Activated CD8-positive, alpha-beta T cell treated with anti-CD3 and anti-CD28 coated beads, Interleukin-2, amount 10 ng/mL, durations not matched to agents 7 days and 5 days (primary cell): ENCODE measurements at regions of chr20 and their contacts with region 1.

Region 1: GRCh38 chr20:45373353-45374100 is 4.6 kb downstream of the TP53TG5 start:
- DNase-seq: peak; percentile 91
- ATAC-seq: peak; percentile 90
- H3K4me3 Mint-ChIP-seq: peak overlapping the region; percentile 73
- H3K27ac Mint-ChIP-seq: peak overlapping the region; percentile 87
- H3K4me1 Mint-ChIP-seq: peaks cover 38% of the 10 kb centered on the region
- H3K27me3 Mint-ChIP-seq: no peaks in the 10 kb centered on the region

Region 2: DNA sequence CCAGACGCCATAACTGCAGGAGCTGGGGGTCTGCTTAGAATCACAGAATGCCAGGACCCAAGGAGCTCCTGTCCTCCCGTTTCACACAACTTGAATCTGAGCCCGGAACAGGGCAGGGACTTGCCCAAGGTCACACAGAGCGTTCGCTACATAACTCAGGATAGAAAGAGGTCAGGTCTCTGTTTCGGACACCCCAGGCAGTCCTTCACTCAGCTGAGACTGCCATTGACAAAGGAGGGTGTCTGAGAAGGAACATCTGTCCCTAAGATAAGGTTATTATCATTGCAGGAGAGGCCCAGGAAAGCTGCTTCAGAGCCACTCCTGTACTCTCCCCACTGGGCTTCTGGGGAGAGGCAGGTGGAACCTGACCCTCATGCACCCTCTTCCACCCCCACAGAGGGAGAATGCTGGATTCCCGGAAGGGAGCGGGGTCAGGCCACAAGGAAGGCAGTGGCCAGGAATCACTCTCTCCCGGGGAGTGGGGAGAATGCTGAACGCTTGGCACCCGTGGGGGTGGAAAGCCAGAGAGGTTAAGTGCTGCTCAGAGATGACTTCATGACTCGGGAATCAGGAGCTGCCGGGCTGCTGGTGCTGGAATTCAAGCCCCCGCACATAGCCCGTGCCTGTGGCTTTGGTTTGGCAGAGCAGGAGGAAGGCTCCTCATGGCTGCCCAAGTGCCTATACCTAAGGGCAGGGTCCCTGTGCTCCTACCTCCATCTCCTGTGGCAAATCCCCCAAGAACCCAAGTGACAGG is 36.0 kb before region 1 on chr20:
- CTCF ChIA-PET with region 1: interaction called, 10 read pairs
- POLR2A ChIA-PET with region 1: no interaction called
- DNase-seq: no peak
- ATAC-seq: no peak
- H3K4me3 Mint-ChIP-seq: no peak overlapping the region
- H3K27ac Mint-ChIP-seq: no peak overlapping the region
- H3K4me1 Mint-ChIP-seq: no peaks in the 10 kb centered on the region
- H3K27me3 Mint-ChIP-seq: no peaks in the 10 kb centered on the region

Region 3: DNA sequence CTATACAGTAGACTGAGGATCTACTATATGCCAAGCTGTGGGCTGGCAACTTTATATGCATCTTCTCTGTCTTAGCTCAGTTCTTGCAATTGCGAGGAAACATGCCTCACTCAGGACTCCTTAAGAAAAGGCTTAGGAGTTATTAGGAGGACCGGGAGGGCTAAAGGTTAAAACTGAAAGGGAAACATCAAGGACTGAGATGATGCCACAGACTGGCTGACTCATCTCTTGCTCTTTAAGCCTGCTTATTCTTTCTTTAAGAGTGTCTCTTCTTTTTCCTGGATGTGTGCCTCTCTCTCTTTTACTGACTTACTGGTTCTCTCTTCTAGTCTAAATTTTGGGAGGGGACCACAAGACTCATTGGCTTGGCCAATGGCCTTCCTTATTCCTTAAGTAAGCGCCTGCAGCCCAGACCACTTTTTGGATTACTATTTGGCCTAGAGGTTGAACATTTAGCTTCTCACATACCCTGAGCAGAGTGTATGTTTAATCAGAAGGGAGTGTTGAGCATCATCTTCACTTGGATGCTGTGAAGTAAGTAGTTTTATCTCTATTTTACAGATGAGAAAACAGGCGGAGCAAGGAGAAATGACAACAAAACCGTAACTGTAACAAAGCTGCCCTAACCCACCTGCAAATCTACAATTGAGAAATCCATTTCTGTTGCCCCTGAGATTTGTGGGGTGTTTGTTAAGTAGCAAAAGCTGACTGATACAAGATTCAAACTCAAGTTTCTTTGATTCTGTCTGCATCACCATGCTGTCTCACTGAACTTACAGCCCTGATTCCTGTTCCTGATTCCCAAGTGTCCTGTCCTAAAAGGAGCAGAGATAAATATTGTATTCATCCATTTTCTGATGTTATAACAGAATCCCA is 18.1 kb before region 1 on chr20:
- CTCF ChIA-PET with region 1: interaction called, 167 read pairs
- POLR2A ChIA-PET with region 1: interaction called, 3 read pairs
- DNase-seq: no peak
- ATAC-seq: peak; percentile 69
- H3K4me3 Mint-ChIP-seq: peak overlapping the region; percentile 11
- H3K27ac Mint-ChIP-seq: peak overlapping the region; percentile 70
- H3K4me1 Mint-ChIP-seq: peaks cover 59% of the 10 kb centered on the region
- H3K27me3 Mint-ChIP-seq: peaks cover 2% of the 10 kb centered on the region

Region 4: GRCh38 chr20:45406259-45407066 is 32.9 kb after region 1 on chr20:
- CTCF ChIA-PET with region 1: interaction called, 25 read pairs
- POLR2A ChIA-PET with region 1: interaction called, 4 read pairs
- DNase-seq: peak; percentile 54
- ATAC-seq: peak; percentile 62
- H3K4me3 Mint-ChIP-seq: peak overlapping the region; percentile 73
- H3K27ac Mint-ChIP-seq: peak overlapping the region; percentile 49
- H3K4me1 Mint-ChIP-seq: peaks cover 16% of the 10 kb centered on the region
- H3K27me3 Mint-ChIP-seq: peaks cover 15% of the 10 kb centered on the region

Region 5: GRCh38 chr20:45450097-45450818 is 76.7 kb after region 1 on chr20:
- CTCF ChIA-PET with region 1: interaction called, 92 read pairs
- POLR2A ChIA-PET with region 1: no interaction called
- DNase-seq: peak; percentile 42
- ATAC-seq: peak; percentile 50
- H3K4me3 Mint-ChIP-seq: no peak overlapping the region
- H3K27ac Mint-ChIP-seq: no peak overlapping the region
- H3K4me1 Mint-ChIP-seq: peaks cover 17% of the 10 kb centered on the region
- H3K27me3 Mint-ChIP-seq: peaks cover 9% of the 10 kb centered on the region

Region 6: DNA sequence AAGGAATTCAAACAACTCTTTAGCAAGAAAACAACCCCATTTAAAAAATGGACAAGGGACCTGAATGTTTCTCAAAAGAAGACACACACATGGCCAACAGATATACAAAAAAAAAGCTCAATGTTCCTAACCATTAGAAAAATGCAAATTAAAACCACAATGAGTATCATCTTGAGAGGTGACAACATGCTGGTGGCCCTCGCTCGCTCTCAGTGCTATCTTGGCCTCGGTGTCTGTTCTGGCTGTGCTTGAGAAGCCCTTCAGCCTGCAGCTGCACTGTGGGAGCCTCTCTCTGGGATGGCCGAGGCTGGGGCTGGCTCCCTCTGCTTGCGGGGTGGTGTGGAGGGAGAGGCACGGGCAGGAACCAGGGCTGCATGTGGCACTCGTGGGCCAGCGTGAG is 362.0 kb after region 1 on chr20:
- CTCF ChIA-PET with region 1: no interaction called
- POLR2A ChIA-PET with region 1: no interaction called
- DNase-seq: no peak
- ATAC-seq: no peak
- H3K4me3 Mint-ChIP-seq: no peak overlapping the region
- H3K27ac Mint-ChIP-seq: no peak overlapping the region
- H3K4me1 Mint-ChIP-seq: no peaks in the 10 kb centered on the region
- H3K27me3 Mint-ChIP-seq: peaks cover 9% of the 10 kb centered on the region